ENCODE measurements at regions of chr9 and their contacts with region 1.

Region 1: GRCh38 chr9:21688108-21689102 is 114.0 kb upstream of the MTAP start:
- DNase-seq: no peak
- ATAC-seq: peak in 1 of 8 donors; percentile 35
- H3K4me3 ChIP-seq: peak overlapping the region in 2 of 10 donors; percentile 16 to 17
- H3K27ac ChIP-seq: peak overlapping the region in 1 of 10 donors; percentile 51
- H3K4me1 ChIP-seq: peaks cover 0 to 5% (median 0%) of the 10 kb centered on the region in 9 donors
- H3K27me3 ChIP-seq: peaks cover 0 to 8% (median 0%) of the 10 kb centered on the region in 7 donors
- CTCF ChIP-seq: no peak

Region 2: DNA sequence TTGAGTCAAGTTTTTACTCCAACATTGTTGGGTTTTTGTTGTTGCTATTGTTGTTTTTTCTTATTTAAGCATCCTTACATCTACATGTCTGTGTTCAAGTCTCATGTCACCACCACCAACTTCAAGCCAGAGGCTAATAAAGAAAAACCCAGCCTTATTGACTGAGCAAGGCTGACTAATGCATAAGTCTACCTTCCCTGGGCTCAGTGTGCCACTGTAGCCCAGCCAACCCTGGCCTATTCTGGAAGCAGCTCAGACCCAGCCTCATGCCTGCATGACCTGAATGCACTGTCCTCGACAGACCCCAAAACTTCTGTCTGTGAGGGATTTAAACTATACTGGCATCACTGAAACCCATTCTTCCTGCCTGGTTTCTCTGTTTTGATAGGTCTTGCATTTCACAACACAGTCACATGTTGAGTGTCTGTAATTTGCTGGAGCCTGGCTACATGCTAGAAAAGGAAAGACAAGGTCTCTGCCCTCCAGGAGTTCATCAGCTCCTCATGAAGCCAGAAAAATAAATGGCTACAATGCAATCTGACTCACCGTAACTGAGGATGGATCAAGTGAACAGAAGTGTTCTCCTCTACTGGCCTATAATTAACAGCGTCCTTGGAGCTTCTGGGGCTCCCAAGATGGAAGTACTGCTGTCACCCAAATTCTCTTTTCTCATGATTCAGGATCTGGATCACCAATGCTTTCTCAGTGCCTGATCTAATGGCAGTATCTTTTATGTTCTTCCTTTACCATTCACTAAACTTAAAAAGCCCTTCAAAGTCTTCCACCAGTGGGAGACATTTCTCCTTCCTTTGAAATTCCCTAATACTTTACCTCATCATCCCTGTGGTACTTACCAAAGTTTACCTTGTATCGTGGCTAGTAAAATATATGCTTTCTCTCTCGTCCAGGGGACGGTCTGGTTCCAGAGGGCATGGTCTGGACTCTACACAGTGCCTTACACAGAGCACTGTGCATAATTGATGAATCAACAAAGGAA is 102.4 kb before region 1 on chr9:
- intact Hi-C with region 1: loop called in 1 of 10 experiments (anchors 10 kb)
- DNase-seq: no peak
- ATAC-seq: no peak
- H3K4me3 ChIP-seq: no peak overlapping the region
- H3K27ac ChIP-seq: no peak overlapping the region
- H3K4me1 ChIP-seq: no peaks in the 10 kb centered on the region
- H3K27me3 ChIP-seq: peaks cover 0 to 10% (median 0%) of the 10 kb centered on the region in 7 donors
- CTCF ChIP-seq: no peak